MCF 10A (cell line): ENCODE measurements at regions of chrX and their contacts with region 1.

Region 1: GRCh38 chrX:15686818-15687685 is 22.4 kb upstream of the CLTRN start:
- DNase-seq: peak; percentile 78
- H3K4me3 Mint-ChIP-seq: no peak overlapping the region
- H3K27ac Mint-ChIP-seq: peak overlapping the region; percentile 39
- H3K4me1 Mint-ChIP-seq: no peaks in the 10 kb centered on the region
- H3K27me3 Mint-ChIP-seq: no peaks in the 10 kb centered on the region
- CTCF ChIP-seq: peak; percentile 71

Region 2: DNA sequence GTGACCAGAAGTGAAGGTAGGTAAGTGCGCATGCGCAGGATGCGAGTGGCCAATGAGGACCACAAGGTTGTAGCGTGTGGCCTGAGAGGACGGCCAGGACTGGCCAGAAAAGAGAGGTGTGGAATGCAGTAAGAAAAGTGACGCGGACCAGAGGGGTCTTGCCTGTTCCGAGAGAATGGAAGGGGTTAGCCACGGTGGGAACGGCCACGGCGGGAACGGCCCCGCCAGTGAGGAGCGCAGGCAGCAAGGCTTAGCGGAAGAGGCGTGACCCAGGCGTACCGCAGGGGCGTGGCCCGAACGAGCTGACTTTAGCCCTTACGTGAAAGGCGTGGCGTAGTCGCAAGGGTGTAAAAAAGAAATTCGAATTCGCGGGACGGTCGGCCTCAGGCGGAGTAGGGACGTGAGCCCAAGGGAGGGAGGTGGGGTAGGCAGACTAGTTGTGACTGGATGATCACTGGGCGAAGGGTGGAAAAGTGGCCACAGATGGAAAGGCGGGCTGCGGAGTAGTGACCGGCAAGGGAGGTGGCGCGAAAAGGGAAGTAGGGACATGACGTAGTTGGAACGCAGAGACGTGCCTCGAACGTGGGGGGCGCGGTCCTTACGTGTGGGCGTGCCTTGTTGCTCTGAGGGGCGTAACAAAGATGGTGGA is 12.1 kb before region 1 on chrX:
- CTCF ChIA-PET with region 1: interaction called, 26 read pairs
- POLR2A ChIA-PET with region 1: interaction called, 3 read pairs
- intact Hi-C with region 1: no loop called
- DNase-seq: peak; percentile 98
- H3K4me3 Mint-ChIP-seq: no peak overlapping the region
- H3K27ac Mint-ChIP-seq: no peak overlapping the region
- H3K4me1 Mint-ChIP-seq: peaks cover 16% of the 10 kb centered on the region
- H3K27me3 Mint-ChIP-seq: peaks cover 17% of the 10 kb centered on the region
- CTCF ChIP-seq: no peak

Region 3: DNA sequence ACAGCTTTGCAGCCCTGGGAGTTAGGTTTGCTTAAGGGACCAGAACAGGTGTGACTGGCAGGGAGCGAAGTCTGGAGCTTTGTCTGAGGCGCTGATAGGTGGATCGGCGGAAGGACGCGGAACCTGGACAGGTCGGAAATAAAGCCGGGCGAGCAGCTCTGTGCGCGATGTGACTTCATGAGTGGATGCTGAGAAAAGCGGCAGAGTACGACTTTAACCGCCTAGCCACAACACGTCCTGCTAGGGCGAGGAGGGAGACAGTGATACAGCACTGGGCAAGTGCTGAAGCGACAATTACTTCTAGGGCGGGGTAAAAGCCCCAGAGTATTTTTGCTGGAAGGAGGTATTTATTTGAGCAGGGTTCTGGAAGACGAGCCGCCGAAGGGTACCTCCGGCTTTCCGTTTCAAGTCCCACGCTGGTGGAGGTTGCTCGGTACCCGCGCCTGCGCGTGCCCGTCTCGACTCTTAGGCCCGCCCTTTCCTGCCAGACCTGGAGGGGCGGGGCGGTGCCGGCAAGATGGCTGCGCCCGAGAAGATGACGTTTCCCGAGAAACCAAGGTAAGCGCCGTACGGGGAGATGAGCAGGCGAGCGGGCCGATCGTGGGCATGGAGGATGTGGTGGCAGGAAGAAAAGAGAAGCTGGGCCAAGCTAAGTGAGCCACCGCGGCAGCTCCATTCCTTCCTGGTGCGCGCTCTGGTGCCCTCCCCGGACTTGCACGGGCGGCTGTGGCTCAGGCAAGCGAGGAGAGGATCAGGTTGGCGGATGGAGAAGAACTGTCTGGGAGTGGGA is 103.1 kb after region 1 on chrX and contains the start of gene ZRSR2:
- CTCF ChIA-PET with region 1: interaction called, 4 read pairs
- POLR2A ChIA-PET with region 1: no interaction called
- intact Hi-C with region 1: loop called (anchors 2 kb)
- DNase-seq: peak; percentile 84
- H3K4me3 Mint-ChIP-seq: no peak within 1 kb of the TSS
- H3K27ac Mint-ChIP-seq: no peak within 1 kb of the TSS
- H3K4me1 Mint-ChIP-seq: no peaks in the 10 kb centered on the region
- H3K27me3 Mint-ChIP-seq: no peaks in the 10 kb centered on the region
- CTCF ChIP-seq: no peak
- total RNA-seq, gene ZRSR2: 17.0 and 20.3 TPM in 2 replicates

Region 4: GRCh38 chrX:15848576-15848975 is 161.5 kb after region 1 on chrX:
- CTCF ChIA-PET with region 1: no interaction called
- POLR2A ChIA-PET with region 1: no interaction called
- intact Hi-C with region 1: no loop called
- DNase-seq: no peak
- H3K4me3 Mint-ChIP-seq: no peak overlapping the region
- H3K27ac Mint-ChIP-seq: no peak overlapping the region
- H3K4me1 Mint-ChIP-seq: no peaks in the 10 kb centered on the region
- H3K27me3 Mint-ChIP-seq: peaks cover 34% of the 10 kb centered on the region
- CTCF ChIP-seq: no peak

Region 5: DNA sequence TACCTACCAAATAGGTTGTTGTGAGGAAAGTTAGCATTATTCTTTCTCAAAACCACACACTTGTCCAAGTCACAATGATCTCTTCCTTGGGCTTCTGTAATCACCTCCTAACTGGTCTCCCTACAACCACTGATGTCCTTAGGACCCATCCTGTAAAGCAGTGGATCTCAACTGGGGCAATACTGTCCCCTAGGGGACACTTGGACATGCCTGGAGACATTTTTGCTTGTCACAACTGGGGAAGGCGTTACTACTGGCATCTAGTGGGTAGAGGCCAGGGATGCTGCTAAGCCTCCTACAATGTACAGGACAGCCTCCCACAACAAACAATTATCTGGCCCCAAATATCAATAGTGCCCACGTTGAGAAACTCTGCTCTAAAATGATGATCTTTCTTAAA is 286.2 kb after region 1 on chrX:
- CTCF ChIA-PET with region 1: no interaction called
- POLR2A ChIA-PET with region 1: no interaction called
- intact Hi-C with region 1: loop called (anchors 1 kb)
- DNase-seq: peak; percentile 75
- H3K4me3 Mint-ChIP-seq: no peak overlapping the region
- H3K27ac Mint-ChIP-seq: no peak overlapping the region
- H3K4me1 Mint-ChIP-seq: no peaks in the 10 kb centered on the region
- H3K27me3 Mint-ChIP-seq: peaks cover 59% of the 10 kb centered on the region
- CTCF ChIP-seq: peak; percentile 29

Region 6: GRCh38 chrX:16695079-16695676 is 1008.1 kb after region 1 on chrX:
- CTCF ChIA-PET with region 1: interaction called, 5 read pairs
- POLR2A ChIA-PET with region 1: no interaction called
- intact Hi-C with region 1: loop called (anchors 10 kb)
- DNase-seq: peak; percentile 68
- H3K4me3 Mint-ChIP-seq: no peak overlapping the region
- H3K27ac Mint-ChIP-seq: no peak overlapping the region
- H3K4me1 Mint-ChIP-seq: no peaks in the 10 kb centered on the region
- H3K27me3 Mint-ChIP-seq: peaks cover 47% of the 10 kb centered on the region
- CTCF ChIP-seq: peak; percentile 80